Calu3 (cell line): ENCODE measurements at regions of chr13 and their contacts with region 1.

Region 1: GRCh38 chr13:48037346-48038173 is at the start of gene NUDT15:
- DNase-seq: peak; percentile 92
- H3K4me3 Mint-ChIP-seq: peak within 1 kb of the TSS; percentile 93
- H3K27ac Mint-ChIP-seq: peak within 1 kb of the TSS; percentile 95
- H3K4me1 Mint-ChIP-seq: peaks cover 22% of the 10 kb centered on the region
- H3K27me3 Mint-ChIP-seq: no peaks in the 10 kb centered on the region
- CTCF ChIP-seq: peak; percentile 88
- total RNA-seq, gene NUDT15: 19.2 and 19.4 TPM in 2 replicates

Region 2: DNA sequence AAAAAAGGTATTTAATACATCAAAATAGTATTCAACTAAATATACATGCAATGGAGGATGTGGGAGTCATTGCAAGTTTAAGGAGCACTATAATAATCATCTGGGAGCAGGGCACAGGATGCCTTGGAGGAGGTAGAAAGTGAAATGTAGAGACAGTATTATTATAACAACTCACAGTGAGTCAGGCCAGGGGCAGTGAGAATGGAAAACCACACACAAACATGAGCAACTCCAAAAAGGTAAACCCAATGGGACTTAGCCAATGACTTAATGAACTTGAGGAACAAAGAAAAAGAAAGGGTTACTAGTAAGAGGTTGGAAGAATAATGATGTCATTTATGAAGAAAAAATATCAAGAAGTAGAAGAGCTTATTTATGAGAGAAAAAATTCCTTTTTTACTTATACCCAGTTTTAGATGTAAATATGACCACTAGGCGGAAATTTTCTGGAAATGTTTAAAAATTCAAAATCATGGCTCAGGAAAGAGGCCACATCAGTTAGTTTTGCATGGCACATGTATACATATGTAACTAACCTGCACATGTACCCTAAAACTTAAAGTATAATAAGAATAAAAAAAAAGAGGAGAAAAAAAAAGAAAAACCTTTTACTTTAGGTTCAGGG is 425.8 kb before region 1 on chr13:
- CTCF ChIA-PET with region 1: no interaction called
- intact Hi-C with region 1: no loop called
- DNase-seq: no peak
- H3K4me3 Mint-ChIP-seq: no peak overlapping the region
- H3K27ac Mint-ChIP-seq: no peak overlapping the region
- H3K4me1 Mint-ChIP-seq: no peaks in the 10 kb centered on the region
- H3K27me3 Mint-ChIP-seq: no peaks in the 10 kb centered on the region
- CTCF ChIP-seq: no peak

Region 3: DNA sequence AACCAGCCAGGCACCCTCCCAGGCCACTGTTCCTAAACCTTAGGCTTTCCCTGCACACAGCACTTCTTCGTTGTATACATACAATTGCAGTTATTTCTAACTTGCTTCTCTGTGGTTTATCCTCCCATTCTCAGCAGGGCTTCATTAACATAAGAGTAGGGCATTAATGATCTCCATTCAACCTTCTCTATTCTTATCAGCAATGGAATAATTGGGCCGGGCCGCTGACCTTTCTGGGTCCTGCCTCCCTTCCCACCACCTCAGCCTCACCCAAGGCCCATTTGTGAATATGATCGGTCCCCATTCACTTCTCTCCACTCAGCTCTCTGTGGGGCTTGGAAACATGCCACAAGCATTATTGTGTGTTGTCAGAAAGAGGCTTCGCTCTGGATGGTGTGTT is 220.7 kb before region 1 on chr13:
- CTCF ChIA-PET with region 1: no interaction called
- intact Hi-C with region 1: no loop called
- DNase-seq: no peak
- H3K4me3 Mint-ChIP-seq: no peak overlapping the region
- H3K27ac Mint-ChIP-seq: no peak overlapping the region
- H3K4me1 Mint-ChIP-seq: peaks cover 9% of the 10 kb centered on the region
- H3K27me3 Mint-ChIP-seq: no peaks in the 10 kb centered on the region
- CTCF ChIP-seq: no peak

Region 4: GRCh38 chr13:48009298-48009697 is 28.3 kb before region 1 on chr13:
- CTCF ChIA-PET with region 1: no interaction called
- intact Hi-C with region 1: loop called (anchors 2 kb)
- DNase-seq: peak; percentile 56
- H3K4me3 Mint-ChIP-seq: peak overlapping the region; percentile 1
- H3K27ac Mint-ChIP-seq: peak overlapping the region; percentile 83
- H3K4me1 Mint-ChIP-seq: peaks cover 36% of the 10 kb centered on the region
- H3K27me3 Mint-ChIP-seq: no peaks in the 10 kb centered on the region
- CTCF ChIP-seq: no peak

Region 5: DNA sequence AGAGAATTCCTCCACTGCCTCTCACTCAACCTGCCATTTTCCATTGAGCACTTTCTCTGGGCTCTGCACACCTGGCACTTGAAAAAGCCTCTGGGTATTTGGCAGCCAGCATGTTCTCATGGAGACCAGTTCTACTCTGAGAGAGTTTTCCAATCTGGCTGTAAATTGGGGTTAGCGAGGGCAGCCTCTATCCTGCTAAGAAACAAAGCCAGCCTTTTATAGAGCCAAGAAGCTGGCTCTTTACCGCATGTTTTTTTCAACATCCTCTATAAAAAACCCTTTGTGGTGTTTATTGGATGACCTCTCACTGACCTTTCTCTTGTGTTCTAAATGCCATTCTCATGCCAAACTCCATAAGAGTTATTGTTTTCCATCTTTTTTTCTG is 547.9 kb after region 1 on chr13:
- CTCF ChIA-PET with region 1: interaction called, 4 read pairs
- intact Hi-C with region 1: loop called (anchors 5 kb)
- DNase-seq: peak; percentile 57
- H3K4me3 Mint-ChIP-seq: no peak overlapping the region
- H3K27ac Mint-ChIP-seq: peak overlapping the region; percentile 58
- H3K4me1 Mint-ChIP-seq: peaks cover 67% of the 10 kb centered on the region
- H3K27me3 Mint-ChIP-seq: no peaks in the 10 kb centered on the region
- CTCF ChIP-seq: no peak